Right cardiac atrium (tissue), 5 donors: ENCODE measurements at regions of chr1 and their contacts with region 1.

Region 1: GRCh38 chr1:24659993-24660665 is 17.0 kb downstream of the SRRM1 start:
- DNase-seq: no peak
- ATAC-seq: no peak
- H3K4me3 ChIP-seq: no peak overlapping the region
- H3K27ac ChIP-seq: no peak overlapping the region
- H3K4me1 ChIP-seq: no peaks in the 10 kb centered on the region
- H3K27me3 ChIP-seq: no peaks in the 10 kb centered on the region

Region 2: DNA sequence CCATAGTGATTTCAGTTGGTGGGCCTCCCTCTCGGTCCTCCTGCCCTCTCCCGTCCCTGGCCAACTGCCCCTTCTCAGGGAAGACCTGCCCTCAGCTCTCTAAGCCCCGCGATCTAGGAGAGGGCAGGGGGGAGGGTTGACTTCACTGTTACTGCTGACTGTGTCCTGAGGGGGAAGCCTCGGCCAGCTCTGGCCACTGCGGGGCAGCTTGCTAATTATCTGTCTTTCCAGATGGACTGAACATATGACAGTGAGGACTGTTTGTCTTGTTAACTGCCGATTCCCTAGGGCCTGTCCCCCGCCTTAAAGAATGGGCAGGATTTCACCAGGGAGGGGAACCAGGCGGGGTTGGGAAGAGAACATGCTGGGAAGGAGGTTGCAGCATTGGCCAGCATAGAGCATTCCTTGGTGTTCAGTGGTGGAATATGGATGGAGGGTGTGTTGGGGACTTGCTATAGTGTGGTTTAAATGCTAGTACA is 221.7 kb before region 1 on chr1:
- intact Hi-C with region 1: no loop called
- DNase-seq: peak; percentile 40 to 74 (median 67)
- ATAC-seq: peak; percentile 77 to 80
- H3K4me3 ChIP-seq: no peak overlapping the region
- H3K27ac ChIP-seq: no peak overlapping the region
- H3K4me1 ChIP-seq: peaks cover 4% of the 10 kb centered on the region
- H3K27me3 ChIP-seq: no peaks in the 10 kb centered on the region

Region 3: DNA sequence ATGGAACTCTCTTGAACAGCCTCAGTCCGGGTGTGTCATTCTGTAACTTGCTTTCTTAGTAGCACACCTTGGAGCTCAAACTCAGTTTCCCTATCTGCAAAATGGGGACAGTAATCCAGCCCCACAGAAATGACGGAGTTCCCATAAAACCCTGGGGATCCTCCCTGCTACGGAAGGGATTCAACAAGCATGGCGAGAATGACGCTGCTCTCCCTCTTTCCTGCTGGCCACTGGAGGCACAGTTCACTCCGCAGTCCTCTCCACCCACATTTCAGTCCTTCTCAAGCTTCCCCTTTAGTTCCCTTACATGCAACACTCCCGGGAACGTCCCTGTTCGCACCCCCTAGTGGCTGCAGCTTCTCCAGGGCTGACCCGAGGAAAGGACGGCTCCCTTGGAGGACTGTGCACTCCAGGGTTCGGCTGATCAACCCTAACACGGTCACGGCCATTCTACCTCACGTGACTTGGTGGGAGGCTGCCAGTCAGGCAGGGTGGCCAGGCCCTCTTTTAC is 249.3 kb after region 1 on chr1:
- intact Hi-C with region 1: loop called in 1 of 4 experiments (anchors 10 kb)
- DNase-seq: peak; percentile 70 to 81 (median 78)
- ATAC-seq: peak; percentile 46 to 78
- H3K4me3 ChIP-seq: no peak overlapping the region
- H3K27ac ChIP-seq: no peak overlapping the region
- H3K4me1 ChIP-seq: no peaks in the 10 kb centered on the region
- H3K27me3 ChIP-seq: no peaks in the 10 kb centered on the region

Region 4: DNA sequence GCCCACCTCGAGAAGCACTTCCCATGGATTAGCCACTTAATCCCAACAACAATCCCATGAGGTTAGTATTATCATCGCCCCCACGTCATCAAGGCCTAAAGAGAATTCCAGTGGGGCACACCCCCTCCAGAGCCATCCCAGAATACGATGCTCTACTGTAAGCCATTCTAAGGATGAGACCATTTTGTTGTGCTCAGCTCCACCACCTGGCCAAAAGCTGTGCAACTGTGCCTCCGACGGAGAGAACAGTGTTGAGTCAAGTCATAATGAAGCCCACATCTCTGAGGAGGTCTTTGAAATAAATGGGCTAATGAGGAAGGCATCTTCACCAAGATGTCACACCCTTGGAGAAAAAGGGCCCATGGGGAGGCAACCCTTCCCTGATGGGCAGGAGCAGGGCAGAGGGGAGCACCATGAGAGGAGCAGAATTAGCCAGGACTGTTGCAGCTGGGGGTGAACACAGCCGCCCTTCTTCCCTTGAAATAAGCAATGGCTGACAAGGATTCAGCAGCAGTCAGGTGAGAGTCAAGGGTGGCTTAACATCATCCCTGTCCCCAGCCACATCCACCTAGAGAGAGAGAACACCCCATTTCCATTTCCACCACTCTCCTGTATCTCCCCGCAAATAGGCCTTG is 557.6 kb after region 1 on chr1:
- intact Hi-C with region 1: loop called in 1 of 4 experiments (anchors 10 kb)
- DNase-seq: no peak
- ATAC-seq: no peak
- H3K4me3 ChIP-seq: no peak overlapping the region
- H3K27ac ChIP-seq: no peak overlapping the region
- H3K4me1 ChIP-seq: no peaks in the 10 kb centered on the region
- H3K27me3 ChIP-seq: no peaks in the 10 kb centered on the region

Region 5: GRCh38 chr1:25239681-25240541 is 579.8 kb after region 1 on chr1:
- intact Hi-C with region 1: loop called in 1 of 4 experiments (anchors 10 kb)
- DNase-seq: peak; percentile 95 to 97 (median 97)
- ATAC-seq: peak; percentile 96
- H3K4me3 ChIP-seq: peak overlapping the region; percentile 64
- H3K27ac ChIP-seq: peak overlapping the region; percentile 96
- H3K4me1 ChIP-seq: no peaks in the 10 kb centered on the region
- H3K27me3 ChIP-seq: no peaks in the 10 kb centered on the region